Activated CD4-positive, alpha-beta memory T cell treated with anti-CD3 and anti-CD28 coated beads for 36 hours (primary cell): ENCODE measurements at regions of chr11 and their contacts with region 1.

Region 1: DNA sequence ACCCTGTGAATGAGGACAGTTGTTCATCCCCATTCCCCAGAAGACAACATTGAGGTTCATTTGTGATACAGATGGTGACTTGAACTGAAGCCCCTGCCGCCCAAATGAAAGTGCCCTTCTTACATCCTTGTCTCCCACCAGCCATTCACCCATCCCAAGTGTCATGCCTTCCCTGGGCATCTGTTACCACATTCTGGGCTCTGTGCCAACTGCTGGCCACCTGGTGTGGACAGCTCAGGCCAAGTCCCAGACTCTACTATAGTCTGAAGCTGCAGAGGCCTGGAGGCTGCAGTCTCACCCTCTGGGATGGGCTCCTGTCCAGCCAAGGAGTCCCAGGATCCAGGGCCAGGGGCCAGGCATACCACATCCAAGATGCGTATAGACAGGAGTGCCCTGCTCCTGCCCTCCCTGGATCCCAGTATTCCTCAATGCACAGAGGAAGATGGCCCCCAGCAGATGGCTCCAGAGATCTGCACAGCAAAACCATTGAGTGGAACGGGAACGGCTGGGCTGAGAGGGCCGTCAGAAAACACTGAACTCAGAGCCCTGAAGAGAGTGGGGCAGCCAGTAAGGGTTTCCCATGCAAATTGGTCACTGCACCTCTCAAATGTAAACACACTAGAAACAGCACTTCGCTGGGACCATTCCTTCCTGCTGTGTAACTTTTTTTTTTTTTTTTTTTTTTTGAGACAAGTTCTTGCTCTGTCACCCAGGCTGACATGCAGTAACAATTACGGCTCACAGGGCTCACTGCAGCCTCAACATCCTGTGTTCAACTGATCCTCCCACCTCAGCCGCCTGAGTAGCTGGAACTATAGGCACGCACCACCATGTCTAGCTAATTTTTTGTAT is 22.8 kb downstream of the ARRB1 start:
- DNase-seq: peak; percentile 77
- H3K4me3 Mint-ChIP-seq: no peak overlapping the region
- H3K27ac Mint-ChIP-seq: peak overlapping the region; percentile 70
- H3K4me1 Mint-ChIP-seq: peaks cover 60% of the 10 kb centered on the region
- H3K27me3 Mint-ChIP-seq: no peaks in the 10 kb centered on the region

Region 2: DNA sequence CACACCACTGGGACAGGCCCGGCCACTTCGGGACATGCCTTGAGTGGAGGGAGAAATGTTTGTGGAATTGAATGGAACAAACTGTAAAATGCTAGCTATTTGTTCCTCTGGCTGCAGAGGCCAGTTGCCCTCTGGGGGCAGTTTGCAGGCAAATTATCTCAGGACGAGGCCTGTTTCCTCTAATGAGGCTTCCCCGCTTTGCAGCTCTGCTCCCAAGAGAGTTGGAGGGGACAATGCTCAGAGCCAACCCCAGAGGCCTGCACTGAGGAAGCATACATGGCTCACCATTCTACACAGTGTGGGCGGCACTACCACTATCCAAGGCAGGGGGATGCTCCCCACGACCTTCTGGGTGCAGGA is 11.4 kb after region 1 on chr11:
- CTCF ChIA-PET with region 1: interaction called, 13 read pairs
- POLR2A ChIA-PET with region 1: interaction called, 4 read pairs
- intact Hi-C with region 1: loop called (anchors 1 kb)
- DNase-seq: no peak
- H3K4me3 Mint-ChIP-seq: no peak overlapping the region
- H3K27ac Mint-ChIP-seq: peak overlapping the region; percentile 89
- H3K4me1 Mint-ChIP-seq: peaks cover 79% of the 10 kb centered on the region
- H3K27me3 Mint-ChIP-seq: no peaks in the 10 kb centered on the region

Region 3: DNA sequence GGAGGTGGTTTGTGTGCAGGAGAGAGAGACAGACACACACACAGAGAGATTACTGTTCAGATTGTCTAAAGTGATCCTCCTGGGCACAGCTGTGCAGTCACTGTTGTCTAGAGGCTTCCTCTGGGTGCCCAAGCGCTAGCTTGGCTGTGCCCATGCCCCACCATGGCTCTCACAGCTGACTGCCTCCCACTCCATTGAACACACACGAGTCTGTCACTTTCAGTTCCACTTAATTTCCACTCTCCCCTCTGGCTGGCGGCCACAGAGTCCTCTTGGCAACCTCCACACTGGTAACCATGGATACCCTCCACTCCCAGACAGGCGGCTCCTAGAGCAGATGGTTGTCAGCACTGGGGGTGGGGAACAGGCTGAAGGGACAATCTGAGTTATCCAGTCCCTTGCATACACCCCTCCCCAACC is 311.1 kb after region 1 on chr11:
- CTCF ChIA-PET with region 1: no interaction called
- POLR2A ChIA-PET with region 1: no interaction called
- intact Hi-C with region 1: no loop called
- DNase-seq: no peak
- H3K4me3 Mint-ChIP-seq: no peak overlapping the region
- H3K27ac Mint-ChIP-seq: no peak overlapping the region
- H3K4me1 Mint-ChIP-seq: no peaks in the 10 kb centered on the region
- H3K27me3 Mint-ChIP-seq: peaks cover 22% of the 10 kb centered on the region